ENCODE measurements at regions of chr3 and their contacts with region 1.

Region 1: GRCh38 chr3:84547971-84548970 is 410.5 kb upstream of the CADM2 start:
- DNase-seq: peak; percentile 52
- H3K4me3 ChIP-seq: no peak overlapping the region
- H3K27ac ChIP-seq: no peak overlapping the region
- H3K4me1 ChIP-seq: peaks cover 0 to 4% (median 0%) of the 10 kb centered on the region in 4 donors
- H3K27me3 ChIP-seq: no peaks in the 10 kb centered on the region
- CTCF ChIP-seq: peak in 1 of 4 experiments; percentile 40
- EP300 ChIP-seq: no peak
- POLR2A ChIP-seq: no peak

Region 2: GRCh38 chr3:84510007-84510406 is 38.3 kb before region 1 on chr3:
- intact Hi-C with region 1: no loop called
- DNase-seq: no peak
- H3K4me3 ChIP-seq: no peak overlapping the region
- H3K27ac ChIP-seq: no peak overlapping the region
- H3K4me1 ChIP-seq: no peaks in the 10 kb centered on the region
- H3K27me3 ChIP-seq: no peaks in the 10 kb centered on the region
- CTCF ChIP-seq: no peak
- EP300 ChIP-seq: no peak
- POLR2A ChIP-seq: no peak

Region 3: GRCh38 chr3:85574306-85574705 is 1026.0 kb after region 1 on chr3:
- intact Hi-C with region 1: loop called (anchors 2 kb)
- DNase-seq: no peak
- H3K4me3 ChIP-seq: no peak overlapping the region
- H3K27ac ChIP-seq: no peak overlapping the region
- H3K4me1 ChIP-seq: no peaks in the 10 kb centered on the region
- H3K27me3 ChIP-seq: no peaks in the 10 kb centered on the region
- CTCF ChIP-seq: no peak
- EP300 ChIP-seq: no peak
- POLR2A ChIP-seq: no peak